Panc1 (cell line): ENCODE measurements at regions of chr2 and their contacts with region 1.

Region 1: DNA sequence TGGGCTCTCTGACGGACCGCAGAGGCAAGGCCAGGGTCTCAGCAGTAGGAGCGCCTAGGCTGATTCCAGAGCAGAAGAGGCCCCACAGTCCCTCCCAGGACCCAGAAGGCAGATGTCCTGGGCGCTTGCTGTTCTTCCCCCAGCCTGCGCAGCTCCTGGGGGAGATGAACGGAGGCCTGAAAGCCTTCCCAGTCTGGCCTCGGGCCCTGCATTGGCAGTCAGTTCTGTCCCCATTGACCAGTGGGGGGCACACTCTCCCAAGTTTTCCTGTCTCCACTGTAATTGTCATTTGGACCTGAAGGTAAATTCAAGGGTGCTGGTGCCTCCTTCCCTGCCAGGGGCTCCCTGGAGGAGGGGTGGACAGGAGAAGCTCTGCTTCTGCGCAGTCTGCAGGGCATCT is 345.7 kb downstream of the CYP26B1 start:
- DNase-seq: no peak
- ATAC-seq: peak; percentile 62
- H3K4me3 ChIP-seq: no peak overlapping the region
- H3K27ac ChIP-seq: no peak overlapping the region
- H3K4me1 ChIP-seq: no peaks in the 10 kb centered on the region
- H3K27me3 ChIP-seq: no peaks in the 10 kb centered on the region
- CTCF ChIP-seq: peak; percentile 60

Region 2: DNA sequence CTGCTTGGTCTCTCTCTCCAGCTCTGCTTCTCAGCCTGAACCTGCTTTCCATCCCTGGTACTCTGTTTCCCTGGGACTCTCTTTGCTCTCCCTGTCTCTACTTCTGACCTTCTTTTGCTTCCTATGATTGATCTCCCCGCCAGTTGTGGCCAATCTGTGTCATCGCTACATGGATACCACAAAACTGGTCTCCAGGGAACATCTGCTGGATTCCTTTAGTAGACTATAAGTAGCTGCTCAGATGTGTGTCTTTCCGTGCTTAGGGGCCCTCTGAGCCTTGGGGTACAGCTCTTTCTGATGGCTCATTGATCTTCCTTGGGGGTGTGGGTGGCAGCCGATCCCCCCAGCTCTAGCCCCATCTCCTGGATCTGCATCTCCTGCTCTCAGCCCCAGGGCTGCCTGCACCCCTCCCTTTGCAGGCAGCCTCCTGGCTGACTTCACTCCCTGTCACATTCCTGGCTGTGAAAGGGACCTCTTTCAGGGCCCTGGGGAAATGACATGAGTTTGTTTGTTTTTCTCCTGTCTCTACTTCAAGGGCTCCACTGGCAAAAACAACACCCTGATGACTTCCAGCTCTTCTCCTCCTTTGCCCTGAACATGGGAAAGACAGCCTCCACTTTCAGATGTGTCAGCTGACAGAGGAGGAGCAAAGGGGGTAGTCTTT is 12.0 kb after region 1 on chr2:
- CTCF ChIA-PET with region 1: no interaction called
- POLR2A ChIA-PET with region 1: no interaction called
- in situ Hi-C with region 1: no loop called
- intact Hi-C with region 1: loop called (anchors 1 kb)
- DNase-seq: no peak
- ATAC-seq: no peak
- H3K4me3 ChIP-seq: no peak overlapping the region
- H3K27ac ChIP-seq: no peak overlapping the region
- H3K4me1 ChIP-seq: no peaks in the 10 kb centered on the region
- H3K27me3 ChIP-seq: no peaks in the 10 kb centered on the region
- CTCF ChIP-seq: no peak